Sciatic nerve (tissue), 2 donors: ENCODE measurements at regions of chr3 and their contacts with region 1.

Region 1: DNA sequence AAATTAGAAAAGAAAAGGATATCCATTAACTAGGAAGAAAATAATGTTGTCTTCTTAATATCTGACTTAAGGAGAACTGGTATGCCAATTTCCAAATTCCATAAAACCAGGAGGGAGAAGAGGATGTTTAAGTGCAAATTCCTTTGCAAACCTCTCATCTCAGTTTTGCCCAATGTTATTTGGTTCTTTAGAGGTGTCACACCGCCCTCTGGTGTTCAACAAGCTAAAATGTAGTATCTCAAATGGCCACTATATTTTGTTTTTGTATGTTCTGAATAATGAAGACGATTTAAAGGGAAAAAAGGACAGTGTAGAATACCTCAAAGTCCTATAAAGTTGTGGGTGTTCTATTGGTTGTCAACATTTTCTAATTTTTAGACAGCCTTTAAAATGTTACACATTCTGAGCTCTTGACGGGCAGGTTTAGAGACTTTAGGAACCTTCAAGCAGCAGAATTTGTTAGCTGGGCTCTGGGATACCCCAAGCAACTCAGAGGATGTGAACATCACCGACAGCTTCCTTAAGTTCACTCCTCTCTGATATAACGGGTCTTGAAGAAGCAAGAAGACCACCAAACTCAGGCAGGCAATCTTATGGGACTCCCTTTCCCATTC is 458.3 kb downstream of the MFSD1 start:
- DNase-seq: peak; percentile 60
- ATAC-seq: peak; percentile 67

Region 2: GRCh38 chr3:158845765-158846350 is 414.3 kb before region 1 on chr3:
- intact Hi-C with region 1: loop called (anchors 2 kb)
- DNase-seq: no peak
- ATAC-seq: no peak

Region 3: GRCh38 chr3:159137949-159138348 is 122.2 kb before region 1 on chr3:
- intact Hi-C with region 1: no loop called
- DNase-seq: no peak
- ATAC-seq: no peak

Region 4: GRCh38 chr3:159236321-159236720 is 23.8 kb before region 1 on chr3:
- intact Hi-C with region 1: no loop called
- DNase-seq: no peak
- ATAC-seq: no peak

Region 5: GRCh38 chr3:159796744-159797143 is 536.6 kb after region 1 on chr3:
- intact Hi-C with region 1: loop called (anchors 5 kb)
- DNase-seq: no peak
- ATAC-seq: peak; percentile 16